ENCODE measurements at regions of chr2 and their contacts with region 1.

Region 1: DNA sequence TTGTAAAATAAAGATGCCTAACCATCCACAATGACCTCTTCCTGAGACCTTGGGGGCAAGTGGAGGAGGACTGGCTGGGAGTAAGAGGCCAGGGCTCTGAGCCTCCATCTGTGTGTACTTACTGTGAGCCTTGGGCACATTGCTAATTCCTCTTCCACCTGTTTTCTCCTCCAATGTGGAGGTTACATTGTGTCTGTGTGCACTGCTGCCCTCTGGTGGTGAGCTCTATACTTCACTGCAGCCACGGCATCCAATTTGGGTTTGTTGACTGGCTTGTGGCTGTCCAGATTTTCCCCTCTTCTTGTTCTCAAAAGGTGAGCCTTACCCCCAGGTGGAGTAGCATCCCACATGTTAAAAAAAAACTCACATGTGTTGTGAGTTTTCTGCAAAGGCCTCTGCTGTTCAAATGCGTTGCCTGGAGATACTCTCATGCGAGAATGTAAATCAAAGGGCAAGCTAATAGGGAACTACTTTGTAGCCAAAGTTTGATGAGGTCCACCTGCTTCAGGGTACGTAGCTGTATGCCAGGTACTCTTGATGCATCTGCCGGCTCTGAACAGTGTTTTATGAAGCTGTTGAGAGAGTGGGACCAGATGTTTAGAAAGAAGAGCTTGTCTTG is 80.8 kb downstream of the APOB start:
- DNase-seq: peak; percentile 71 to 73
- H3K4me3 ChIP-seq: no peak overlapping the region
- H3K27ac ChIP-seq: no peak overlapping the region
- H3K4me1 ChIP-seq: no peaks in the 10 kb centered on the region
- H3K27me3 ChIP-seq: no peaks in the 10 kb centered on the region
- CTCF ChIP-seq: peak; percentile 77 to 88 (median 84)
- POLR2A ChIP-seq: no peak

Region 2: GRCh38 chr2:20666304-20667150 is 296.5 kb before region 1 on chr2 and contains the start of gene GDF7:
- intact Hi-C with region 1: loop called (anchors 5 kb)
- DNase-seq: peak; percentile 61 to 77
- H3K4me3 ChIP-seq: peak within 1 kb of the TSS; percentile 52 to 53
- H3K27ac ChIP-seq: peak within 1 kb of the TSS; percentile 69 to 73
- H3K4me1 ChIP-seq: peaks cover 0 to 11% of the 10 kb centered on the region in 2 donors
- H3K27me3 ChIP-seq: peaks cover 0 to 6% of the 10 kb centered on the region in 2 donors
- CTCF ChIP-seq: peak in 2 of 4 experiments; percentile 41 to 51
- POLR2A ChIP-seq: peak in 1 of 2 donors; percentile 19
- total RNA-seq, gene GDF7: 1.5 to 45.6 (median 5.4) TPM